Activated naive CD4-positive, alpha-beta T cell treated with anti-CD3 and anti-CD28 coated beads for 36 hours (primary cell): ENCODE measurements at regions of chr12 and their contacts with region 1.

Region 1: DNA sequence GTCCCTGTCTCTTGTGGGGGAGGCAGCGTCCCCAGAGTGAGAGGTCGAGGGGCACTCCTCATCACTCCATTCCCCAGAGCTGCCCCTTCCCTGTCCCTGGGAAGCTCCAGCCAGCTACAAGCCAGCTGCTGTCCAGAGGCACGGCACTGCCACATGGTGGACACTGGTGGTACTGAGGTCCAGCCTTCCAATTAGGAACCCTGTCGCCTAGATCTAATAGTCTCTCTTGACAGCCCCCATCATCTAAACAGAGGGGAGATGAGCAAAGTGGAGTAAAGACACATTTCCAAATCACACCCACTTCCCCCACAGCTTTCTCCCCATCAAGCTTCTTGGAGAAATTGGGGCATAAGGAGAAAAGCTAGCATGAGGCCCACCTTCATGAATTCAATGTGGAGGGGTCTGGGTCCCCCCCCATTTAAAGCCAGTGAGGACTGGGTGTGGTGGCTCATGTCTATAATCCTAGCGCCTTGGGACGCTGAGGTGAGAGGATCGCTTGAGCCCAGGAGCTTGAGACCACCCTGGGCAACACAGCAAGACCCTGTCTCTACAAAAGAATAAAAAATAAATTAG is 2.1 kb upstream of the INHBE start:
- DNase-seq: peak; percentile 82
- H3K4me3 Mint-ChIP-seq: no peak overlapping the region
- H3K27ac Mint-ChIP-seq: peak overlapping the region; percentile 19
- H3K4me1 Mint-ChIP-seq: peaks cover 17% of the 10 kb centered on the region
- H3K27me3 Mint-ChIP-seq: no peaks in the 10 kb centered on the region

Region 2: GRCh38 chr12:57261428-57261865 is 191.6 kb before region 1 on chr12:
- CTCF ChIA-PET with region 1: interaction called, 135 read pairs
- intact Hi-C with region 1: loop called (anchors 1 kb)
- DNase-seq: no peak
- H3K4me3 Mint-ChIP-seq: no peak overlapping the region
- H3K27ac Mint-ChIP-seq: no peak overlapping the region
- H3K4me1 Mint-ChIP-seq: no peaks in the 10 kb centered on the region
- H3K27me3 Mint-ChIP-seq: no peaks in the 10 kb centered on the region

Region 3: DNA sequence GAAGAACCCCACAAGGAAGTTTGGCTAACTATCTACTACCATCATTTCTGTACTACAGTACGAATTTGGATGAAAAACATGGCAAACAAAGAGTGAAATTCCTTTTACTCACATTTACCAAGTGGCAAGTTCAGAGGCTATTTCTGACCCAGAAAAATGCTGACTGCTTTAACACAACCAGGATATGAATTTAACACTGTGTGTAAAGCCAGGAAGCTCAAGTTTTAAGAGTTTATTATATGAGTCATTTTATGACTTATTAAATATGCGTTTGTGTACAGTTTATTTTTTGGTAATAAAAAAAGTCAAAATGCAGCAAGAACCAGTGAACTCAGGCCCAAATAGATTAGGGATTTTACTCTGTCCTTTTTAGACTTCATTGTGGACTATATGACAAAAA is 143.6 kb before region 1 on chr12:
- CTCF ChIA-PET with region 1: interaction called, 172 read pairs
- intact Hi-C with region 1: loop called (anchors 1 kb)
- DNase-seq: no peak
- H3K4me3 Mint-ChIP-seq: no peak overlapping the region
- H3K27ac Mint-ChIP-seq: no peak overlapping the region
- H3K4me1 Mint-ChIP-seq: no peaks in the 10 kb centered on the region
- H3K27me3 Mint-ChIP-seq: no peaks in the 10 kb centered on the region

Region 4: GRCh38 chr12:57410534-57410933 is 42.5 kb before region 1 on chr12:
- CTCF ChIA-PET with region 1: interaction called, 11 read pairs
- intact Hi-C with region 1: no loop called
- DNase-seq: no peak
- H3K4me3 Mint-ChIP-seq: no peak overlapping the region
- H3K27ac Mint-ChIP-seq: no peak overlapping the region
- H3K4me1 Mint-ChIP-seq: peaks cover 25% of the 10 kb centered on the region
- H3K27me3 Mint-ChIP-seq: no peaks in the 10 kb centered on the region

Region 5: DNA sequence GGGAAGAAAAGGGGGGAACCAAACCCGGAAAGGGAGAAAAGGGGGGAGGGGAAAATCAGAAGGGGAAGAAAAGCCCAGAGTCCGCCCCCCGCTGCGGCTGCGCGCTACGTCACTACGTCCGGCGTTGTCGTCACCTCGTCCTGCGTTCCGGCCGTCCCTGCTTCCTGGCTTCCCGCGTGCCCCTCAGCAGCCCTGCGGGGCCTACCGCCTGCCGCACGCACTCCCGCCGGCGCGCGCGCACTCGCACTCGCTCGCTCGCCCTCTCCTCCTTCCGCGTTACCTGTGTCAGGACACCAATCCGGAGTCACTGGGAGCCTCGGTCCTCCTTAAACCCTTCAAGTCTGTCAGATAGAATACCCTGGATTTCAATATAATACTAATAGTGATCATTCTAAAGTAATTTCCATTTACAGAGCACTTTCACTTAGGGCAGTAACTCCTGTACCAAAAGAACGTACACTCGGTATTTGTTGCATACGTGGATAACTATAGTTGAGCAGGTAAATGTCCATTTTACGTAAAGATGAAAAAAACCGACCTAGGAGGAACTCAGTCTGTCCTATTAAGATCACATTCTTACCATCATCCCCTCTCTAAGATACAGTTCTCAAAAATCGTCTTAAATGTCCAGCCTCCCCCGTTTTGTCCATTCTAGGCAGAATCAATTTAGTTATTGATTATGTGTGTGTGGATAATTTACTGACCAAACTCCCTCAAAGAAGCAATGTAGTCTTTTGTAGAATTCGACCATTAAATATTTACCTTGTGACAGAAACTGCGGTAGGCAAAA is 21.9 kb before region 1 on chr12 and contains the start of gene R3HDM2:
- CTCF ChIA-PET with region 1: interaction called, 49 read pairs
- intact Hi-C with region 1: no loop called
- DNase-seq: peak; percentile 97
- H3K4me3 Mint-ChIP-seq: peak within 1 kb of the TSS; percentile 94
- H3K27ac Mint-ChIP-seq: peak within 1 kb of the TSS; percentile 98
- H3K4me1 Mint-ChIP-seq: peaks cover 37% of the 10 kb centered on the region
- H3K27me3 Mint-ChIP-seq: no peaks in the 10 kb centered on the region
- total RNA-seq, gene R3HDM2: 42.2 to 44.8 TPM

Region 6: DNA sequence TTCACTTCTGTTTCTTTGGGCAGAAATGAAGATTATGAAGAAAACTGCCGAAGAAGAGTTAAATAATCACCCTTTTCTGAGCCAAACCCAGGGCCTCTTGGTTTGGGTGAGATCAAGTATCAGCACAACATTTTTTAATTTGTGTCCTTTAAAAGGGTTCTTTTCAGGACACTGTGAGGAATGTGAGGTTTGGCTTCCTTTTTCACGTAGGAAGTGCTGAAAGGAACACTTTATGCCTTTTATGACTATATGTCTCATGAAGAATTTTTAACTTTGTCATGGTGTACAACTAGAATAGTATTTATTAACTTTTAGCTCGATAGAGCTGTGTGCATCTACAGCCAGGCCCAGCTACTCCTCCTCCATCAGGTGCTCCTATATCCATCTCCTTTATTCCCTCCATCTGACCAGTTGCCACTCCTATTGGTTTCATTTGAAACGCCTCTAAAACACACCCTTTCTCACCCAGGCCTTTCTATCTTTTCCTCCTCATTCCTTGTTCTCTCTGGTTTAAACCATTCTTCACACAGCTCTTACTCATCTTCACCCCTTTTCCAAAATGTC is 1570.9 kb after region 1 on chr12:
- CTCF ChIA-PET with region 1: no interaction called
- intact Hi-C with region 1: no loop called
- DNase-seq: no peak
- H3K4me3 Mint-ChIP-seq: no peak overlapping the region
- H3K27ac Mint-ChIP-seq: no peak overlapping the region
- H3K4me1 Mint-ChIP-seq: no peaks in the 10 kb centered on the region
- H3K27me3 Mint-ChIP-seq: no peaks in the 10 kb centered on the region